ENCODE measurements at regions of chr13 and their contacts with region 1.

Region 1: DNA sequence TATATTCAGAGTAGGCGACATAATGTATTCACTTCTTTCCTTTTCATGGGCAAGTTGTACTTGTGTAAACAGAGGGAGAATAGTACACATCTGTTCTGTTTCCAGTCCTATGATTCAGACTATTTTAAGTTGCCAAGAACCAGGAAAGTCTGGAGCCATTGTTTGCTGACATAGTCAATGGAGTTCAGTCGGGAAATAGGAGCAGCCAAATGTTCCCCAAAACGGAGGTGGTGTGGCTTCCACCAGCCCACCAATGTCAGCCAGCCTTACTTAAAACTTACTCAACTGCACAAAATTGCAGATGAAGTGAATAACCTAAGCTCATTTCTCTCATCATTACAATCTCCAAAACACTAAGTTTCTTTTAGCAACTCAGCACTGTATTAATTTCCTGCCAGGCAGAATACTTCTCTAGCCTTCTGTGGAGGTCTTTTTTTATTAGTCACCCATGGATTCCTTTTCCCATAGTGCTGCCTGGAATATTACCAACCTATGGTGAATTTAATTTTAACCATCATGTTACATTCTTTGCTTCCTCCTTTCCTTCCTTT is 22.3 kb upstream of the CSNK1A1L start:
- DNase-seq: no peak
- H3K4me3 ChIP-seq: no peak overlapping the region
- H3K27ac ChIP-seq: peak overlapping the region; percentile 27 to 77 (median 68)
- H3K4me1 ChIP-seq: peaks cover 0 to 31% (median 19%) of the 10 kb centered on the region in 4 donors
- H3K27me3 ChIP-seq: no peaks in the 10 kb centered on the region
- CTCF ChIP-seq: no peak
- EP300 ChIP-seq: peak in 2 of 4 donors; percentile 16 to 52
- POLR2A ChIP-seq: no peak

Region 2: GRCh38 chr13:37481011-37481884 is 353.5 kb after region 1 on chr13:
- intact Hi-C with region 1: loop called (anchors 10 kb)
- DNase-seq: no peak
- H3K4me3 ChIP-seq: no peak overlapping the region
- H3K27ac ChIP-seq: peak overlapping the region in 2 of 4 donors; percentile 36 to 61
- H3K4me1 ChIP-seq: peaks cover 0 to 67% (median 35%) of the 10 kb centered on the region in 4 donors
- H3K27me3 ChIP-seq: no peaks in the 10 kb centered on the region
- CTCF ChIP-seq: no peak
- EP300 ChIP-seq: no peak
- POLR2A ChIP-seq: no peak

Measured in sigmoid colon (tissue), 7 donors.